Activated CD4-positive, alpha-beta memory T cell treated with anti-CD3 and anti-CD28 coated beads, Interleukin-2, amount 10 ng/mL, durations not matched to agents 7 days and 5 days (primary cell): ENCODE measurements at regions of chr1 and their contacts with region 1.

Region 1: GRCh38 chr1:159214149-159214760 is 9.6 kb downstream of the ACKR1 start:
- DNase-seq: peak; percentile 26
- H3K4me3 Mint-ChIP-seq: no peak overlapping the region
- H3K27ac Mint-ChIP-seq: no peak overlapping the region
- H3K4me1 Mint-ChIP-seq: no peaks in the 10 kb centered on the region
- H3K27me3 Mint-ChIP-seq: peaks cover 34% of the 10 kb centered on the region

Region 2: GRCh38 chr1:159132271-159132881 is 81.9 kb before region 1 on chr1:
- CTCF ChIA-PET with region 1: interaction called, 47 read pairs
- POLR2A ChIA-PET with region 1: no interaction called
- DNase-seq: peak; percentile 70
- H3K4me3 Mint-ChIP-seq: no peak overlapping the region
- H3K27ac Mint-ChIP-seq: no peak overlapping the region
- H3K4me1 Mint-ChIP-seq: no peaks in the 10 kb centered on the region
- H3K27me3 Mint-ChIP-seq: peaks cover 5% of the 10 kb centered on the region

Region 3: DNA sequence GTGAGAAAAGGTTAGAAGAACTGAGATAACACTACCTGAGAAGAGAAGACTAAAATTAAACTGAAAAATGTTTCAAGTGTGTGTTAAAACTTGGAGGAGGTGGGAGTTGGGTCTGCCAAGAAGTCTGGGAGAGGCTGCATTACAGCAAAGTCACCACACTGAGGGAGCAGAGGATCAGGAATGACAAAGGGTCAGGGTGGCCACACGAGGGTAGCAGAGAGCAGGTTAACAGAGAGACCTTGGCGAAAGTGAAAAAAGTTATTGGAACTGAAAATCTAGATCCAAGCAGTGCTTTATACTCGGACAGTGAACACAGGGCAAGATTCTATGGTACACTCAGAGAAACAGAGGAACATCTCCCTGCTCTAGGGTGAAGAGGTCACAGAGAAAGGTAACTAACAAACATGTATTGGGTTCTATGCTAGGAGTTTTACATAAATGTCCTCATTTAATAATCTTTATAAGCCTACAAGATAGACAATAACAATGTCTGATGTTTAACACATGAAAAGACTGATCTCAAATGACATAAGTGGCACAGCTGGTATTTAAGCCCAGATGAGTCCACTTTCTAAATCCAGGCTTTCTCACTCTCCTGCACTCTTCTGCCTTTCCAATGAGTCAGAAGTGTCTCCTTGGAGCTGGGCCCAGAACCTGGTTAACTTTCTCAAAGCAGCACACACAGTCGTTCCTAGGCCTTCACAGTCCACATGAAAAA is 53.1 kb before region 1 on chr1:
- CTCF ChIA-PET with region 1: interaction called, 15 read pairs
- POLR2A ChIA-PET with region 1: no interaction called
- DNase-seq: peak; percentile 57
- H3K4me3 Mint-ChIP-seq: no peak overlapping the region
- H3K27ac Mint-ChIP-seq: no peak overlapping the region
- H3K4me1 Mint-ChIP-seq: no peaks in the 10 kb centered on the region
- H3K27me3 Mint-ChIP-seq: peaks cover 52% of the 10 kb centered on the region

Region 4: DNA sequence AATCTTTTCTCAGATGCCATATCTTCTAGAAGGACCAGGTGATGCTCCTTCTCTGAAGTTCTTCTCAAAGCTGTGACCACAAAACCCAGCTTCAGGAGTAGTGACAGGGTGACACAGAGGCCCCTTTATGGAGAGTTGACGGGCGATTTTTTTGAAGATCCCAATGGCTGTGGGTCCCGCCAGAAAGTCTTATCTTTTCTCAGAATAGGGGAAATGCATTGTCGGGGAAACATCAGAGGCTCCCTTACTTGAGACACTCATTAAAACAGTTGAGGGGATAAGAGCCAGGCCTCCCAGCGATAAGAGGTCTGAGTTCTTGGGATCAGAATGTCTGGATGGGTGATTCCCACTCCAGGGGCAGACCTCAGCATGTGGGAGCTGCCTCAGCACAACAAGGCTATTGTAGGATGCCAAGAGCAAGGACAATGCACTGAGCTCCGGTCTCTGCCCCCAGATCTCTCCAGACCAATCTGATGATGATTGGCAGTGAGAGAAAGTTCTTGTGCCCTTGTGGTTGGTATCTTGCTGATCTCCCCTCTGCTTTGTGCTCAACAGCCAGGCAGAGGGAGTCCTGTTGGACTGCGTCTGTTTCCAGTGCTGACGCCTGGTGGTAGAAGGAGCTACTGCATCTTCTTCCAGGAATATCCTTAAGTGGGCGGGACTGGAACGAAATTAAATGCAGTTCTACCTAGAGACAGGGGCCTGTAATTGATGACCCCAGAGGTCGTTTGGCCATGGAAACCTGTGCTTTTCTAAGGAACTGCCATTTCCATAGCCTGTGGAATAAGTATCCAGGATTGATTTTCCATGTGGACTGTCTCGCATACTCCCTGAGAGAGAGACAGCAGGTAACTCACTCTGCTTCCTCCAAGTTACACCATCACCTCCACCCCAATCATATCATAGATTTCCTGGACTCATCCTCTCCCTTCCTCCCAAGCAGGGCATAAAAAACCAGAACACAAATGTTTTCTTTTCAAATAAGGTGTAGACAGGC is 16.4 kb before region 1 on chr1:
- CTCF ChIA-PET with region 1: interaction called, 36 read pairs
- POLR2A ChIA-PET with region 1: no interaction called
- DNase-seq: peak; percentile 50
- H3K4me3 Mint-ChIP-seq: no peak overlapping the region
- H3K27ac Mint-ChIP-seq: no peak overlapping the region
- H3K4me1 Mint-ChIP-seq: no peaks in the 10 kb centered on the region
- H3K27me3 Mint-ChIP-seq: peaks cover 46% of the 10 kb centered on the region

Region 5: DNA sequence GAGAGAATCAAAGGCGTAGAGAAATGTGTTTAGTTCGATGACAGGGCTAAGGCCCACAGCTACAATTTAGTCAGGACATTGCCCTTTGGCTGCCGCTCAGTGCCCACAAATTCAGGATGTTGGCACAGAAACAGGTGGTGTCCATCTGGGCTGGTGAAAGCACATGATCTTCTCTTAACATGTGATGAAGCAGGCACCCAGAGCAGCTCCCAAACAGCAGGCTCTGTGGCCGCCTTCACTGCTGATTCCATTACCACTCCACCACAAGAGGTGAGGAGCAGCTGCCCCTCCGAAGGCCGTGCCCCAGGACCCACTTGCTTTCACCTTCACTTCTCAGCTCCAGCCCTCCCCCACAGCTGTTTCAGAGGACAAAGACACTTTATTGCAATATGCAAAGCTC is 15.2 kb after region 1 on chr1:
- CTCF ChIA-PET with region 1: interaction called, 16 read pairs
- POLR2A ChIA-PET with region 1: no interaction called
- DNase-seq: no peak
- H3K4me3 Mint-ChIP-seq: no peak overlapping the region
- H3K27ac Mint-ChIP-seq: no peak overlapping the region
- H3K4me1 Mint-ChIP-seq: no peaks in the 10 kb centered on the region
- H3K27me3 Mint-ChIP-seq: peaks cover 15% of the 10 kb centered on the region

Region 6: DNA sequence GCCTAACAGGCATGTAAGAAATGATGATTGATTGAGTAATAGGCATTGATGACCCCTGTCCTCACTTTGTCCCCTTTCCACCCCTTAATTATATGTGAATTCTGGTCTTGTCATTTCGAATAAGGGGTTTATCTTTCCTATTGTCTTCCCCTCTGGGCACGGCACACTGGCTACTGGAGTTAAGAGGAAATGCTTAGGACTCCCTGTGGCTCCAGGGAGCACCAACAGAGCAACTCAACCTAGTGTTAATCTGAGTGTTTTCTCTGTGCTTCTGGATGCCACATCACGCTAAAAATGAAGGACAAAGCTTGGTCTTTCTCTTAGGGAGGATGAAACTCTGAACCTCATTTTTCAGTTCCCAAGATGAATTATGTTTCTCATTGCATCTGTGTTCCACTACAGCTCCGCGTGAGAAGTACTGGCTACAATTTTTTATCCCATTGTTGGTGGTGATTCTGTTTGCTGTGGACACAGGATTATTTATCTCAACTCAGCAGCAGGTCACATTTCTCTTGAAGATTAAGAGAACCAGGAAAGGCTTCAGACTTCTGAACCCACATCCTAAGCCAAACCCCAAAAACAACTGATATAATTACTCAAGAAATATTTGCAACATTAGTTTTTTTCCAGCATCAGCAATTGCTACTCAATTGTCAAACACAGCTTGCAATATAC is 93.2 kb after region 1 on chr1:
- CTCF ChIA-PET with region 1: no interaction called
- POLR2A ChIA-PET with region 1: no interaction called
- DNase-seq: no peak
- H3K4me3 Mint-ChIP-seq: no peak overlapping the region
- H3K27ac Mint-ChIP-seq: no peak overlapping the region
- H3K4me1 Mint-ChIP-seq: no peaks in the 10 kb centered on the region
- H3K27me3 Mint-ChIP-seq: peaks cover 10% of the 10 kb centered on the region